ENCODE measurements at regions of chr19 and their contacts with region 1.

Region 1: DNA sequence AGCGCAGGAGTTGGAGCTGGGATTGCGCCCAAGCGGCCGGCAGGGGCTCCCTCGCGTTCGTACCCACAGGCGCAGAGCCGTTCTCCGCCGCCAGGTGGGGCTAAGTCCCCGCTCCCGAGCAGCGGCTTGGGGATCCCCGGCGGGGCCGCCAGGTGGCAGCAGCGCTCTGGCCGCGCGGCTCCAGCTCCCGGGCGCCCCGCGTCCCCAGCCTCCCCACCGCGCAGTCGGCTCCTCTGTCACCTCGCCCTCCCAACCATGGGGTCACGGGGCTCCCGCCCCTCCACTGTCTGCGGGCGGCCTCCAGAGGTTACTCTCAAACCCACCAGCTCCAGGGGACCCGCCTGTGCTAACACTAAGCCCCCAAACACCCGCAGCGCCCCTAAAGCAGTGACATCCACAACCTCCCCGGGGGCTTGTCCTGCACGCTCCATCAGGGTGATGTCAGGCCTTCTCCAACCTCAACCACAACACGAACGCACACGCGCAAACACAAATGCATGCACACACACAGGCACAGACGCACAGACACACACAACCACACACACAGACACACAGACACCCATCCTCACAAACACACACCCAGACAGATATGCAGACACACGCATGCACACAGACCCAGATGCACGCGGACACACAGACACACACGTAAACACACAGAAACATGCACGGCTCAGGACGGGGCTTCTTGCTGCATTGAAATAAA is 18.4 kb upstream of the KCTD15 start:
- DNase-seq: peak; percentile 86
- H3K4me3 ChIP-seq: peak overlapping the region in 1 of 2 donors; percentile 24
- H3K27ac ChIP-seq: no peak overlapping the region
- H3K4me1 ChIP-seq: peaks cover 9% of the 10 kb centered on the region
- H3K27me3 ChIP-seq: no peaks in the 10 kb centered on the region
- CTCF ChIP-seq: peak; percentile 100
- POLR2A ChIP-seq: no peak

Region 2: GRCh38 chr19:33235269-33235995 is 542.8 kb before region 1 on chr19:
- intact Hi-C with region 1: loop called (anchors 10 kb)
- DNase-seq: peak; percentile 93
- H3K4me3 ChIP-seq: no peak overlapping the region
- H3K27ac ChIP-seq: no peak overlapping the region
- H3K4me1 ChIP-seq: no peaks in the 10 kb centered on the region
- H3K27me3 ChIP-seq: no peaks in the 10 kb centered on the region
- CTCF ChIP-seq: peak; percentile 76 to 87 (median 82)
- POLR2A ChIP-seq: no peak

Region 3: DNA sequence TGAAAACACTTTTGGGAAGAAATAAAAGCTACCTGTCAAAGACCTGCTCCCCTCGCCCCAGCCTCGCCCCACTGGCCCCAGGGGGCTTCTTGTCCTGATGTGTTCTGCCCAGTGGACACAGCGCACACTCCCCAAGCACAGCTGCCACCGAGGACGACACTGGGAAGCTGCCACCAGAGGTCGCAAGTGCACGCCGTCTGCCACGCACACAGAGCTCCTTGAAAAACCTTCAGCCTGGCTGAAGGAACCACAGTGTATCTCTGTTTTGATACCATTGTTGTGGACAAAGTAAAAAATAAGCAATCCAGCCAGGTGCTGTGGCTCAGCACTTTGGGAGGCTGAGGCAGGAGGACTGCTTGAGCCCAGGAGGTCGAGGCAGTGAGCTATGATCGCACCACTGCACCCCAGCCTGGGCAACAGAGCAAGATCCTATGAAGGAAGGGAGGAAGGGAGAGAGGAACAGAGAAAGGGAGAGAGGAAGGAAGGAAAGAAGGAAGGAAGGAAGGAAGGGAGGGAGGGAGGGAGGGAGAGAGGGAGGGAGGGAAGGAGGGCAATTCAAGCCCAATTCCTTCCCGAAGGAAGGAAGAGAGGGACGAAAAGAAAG is 347.5 kb before region 1 on chr19:
- intact Hi-C with region 1: loop called (anchors 10 kb)
- DNase-seq: peak; percentile 79
- H3K4me3 ChIP-seq: no peak overlapping the region
- H3K27ac ChIP-seq: no peak overlapping the region
- H3K4me1 ChIP-seq: peaks cover 3% of the 10 kb centered on the region
- H3K27me3 ChIP-seq: no peaks in the 10 kb centered on the region
- CTCF ChIP-seq: peak; percentile 40 to 62 (median 53)
- POLR2A ChIP-seq: no peak

Region 4: GRCh38 chr19:34145741-34146202 is 367.5 kb after region 1 on chr19:
- intact Hi-C with region 1: loop called (anchors 10 kb)
- DNase-seq: peak; percentile 67
- H3K4me3 ChIP-seq: no peak overlapping the region
- H3K27ac ChIP-seq: no peak overlapping the region
- H3K4me1 ChIP-seq: no peaks in the 10 kb centered on the region
- H3K27me3 ChIP-seq: no peaks in the 10 kb centered on the region
- CTCF ChIP-seq: peak; percentile 71 to 77 (median 72)
- POLR2A ChIP-seq: no peak

Measured in testis (tissue), 5 donors.